Endothelial cell of umbilical vein (primary cell): ENCODE measurements at regions of chr9 and their contacts with region 1.

Region 1: GRCh38 chr9:137445275-137445807 is 4.2 kb upstream of the ENTPD8 start:
- DNase-seq: peak; percentile 78
- H3K4me3 ChIP-seq: no peak overlapping the region
- H3K27ac ChIP-seq: no peak overlapping the region
- H3K4me1 ChIP-seq: no peaks in the 10 kb centered on the region
- H3K27me3 ChIP-seq: no peaks in the 10 kb centered on the region
- CTCF ChIP-seq: peak; percentile 77 to 87
- POLR2A ChIP-seq: no peak

Region 2: DNA sequence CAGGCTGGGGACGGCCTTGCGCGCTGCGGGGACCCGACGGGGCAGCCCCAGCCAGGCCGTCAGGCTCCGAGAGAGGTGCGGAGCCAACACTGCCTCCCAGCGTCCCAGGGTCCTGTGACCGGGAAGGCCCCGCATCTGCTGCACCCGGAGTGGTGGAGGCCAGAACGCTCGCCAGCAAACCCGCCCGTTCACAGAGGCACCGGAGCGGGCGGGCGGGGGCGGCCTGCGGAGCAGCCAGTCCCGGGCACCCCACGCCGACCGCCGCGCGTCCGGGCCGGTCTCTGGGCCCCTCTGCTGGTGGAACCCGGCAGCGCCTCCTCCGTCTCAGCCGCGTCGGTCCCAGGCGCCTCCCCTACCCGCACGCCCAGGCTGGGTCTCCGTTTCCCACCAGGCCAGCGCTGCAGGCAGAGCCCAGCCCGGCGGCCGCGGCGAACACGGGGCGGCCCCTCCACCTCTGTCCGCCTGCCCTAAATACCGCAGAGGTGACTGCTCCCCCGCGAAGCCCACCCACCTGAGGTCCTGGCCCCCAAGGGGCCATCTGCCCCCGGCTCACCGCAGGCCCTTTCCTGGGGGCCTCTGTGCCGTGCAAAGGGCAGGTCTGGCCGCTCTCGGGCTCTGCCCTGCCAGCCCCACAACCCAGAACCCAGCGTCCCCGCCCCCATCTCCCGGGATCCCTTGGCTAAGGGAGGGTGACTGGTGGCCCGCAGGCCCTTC is 38.3 kb before region 1 on chr9:
- CTCF ChIA-PET with region 1: interaction called, 4 read pairs
- POLR2A ChIA-PET with region 1: no interaction called
- dilution Hi-C with region 1: no loop called
- intact Hi-C with region 1: loop called (anchors 1 kb)
- DNase-seq: peak; percentile 85
- H3K4me3 ChIP-seq: peak overlapping the region in 1 of 3 experiments; percentile 17
- H3K27ac ChIP-seq: no peak overlapping the region
- H3K4me1 ChIP-seq: peaks cover 24% of the 10 kb centered on the region
- H3K27me3 ChIP-seq: no peaks in the 10 kb centered on the region
- CTCF ChIP-seq: peak; percentile 83 to 87
- POLR2A ChIP-seq: no peak

Region 3: GRCh38 chr9:137556069-137556838 is 110.9 kb after region 1 on chr9:
- CTCF ChIA-PET with region 1: no interaction called
- POLR2A ChIA-PET with region 1: no interaction called
- dilution Hi-C with region 1: no loop called
- intact Hi-C with region 1: no loop called
- DNase-seq: no peak
- H3K4me3 ChIP-seq: no peak overlapping the region
- H3K27ac ChIP-seq: no peak overlapping the region
- H3K4me1 ChIP-seq: peaks cover 7% of the 10 kb centered on the region
- H3K27me3 ChIP-seq: no peaks in the 10 kb centered on the region
- CTCF ChIP-seq: no peak
- POLR2A ChIP-seq: no peak